ENCODE measurements at regions of chr3 and their contacts with region 1.

Region 1: DNA sequence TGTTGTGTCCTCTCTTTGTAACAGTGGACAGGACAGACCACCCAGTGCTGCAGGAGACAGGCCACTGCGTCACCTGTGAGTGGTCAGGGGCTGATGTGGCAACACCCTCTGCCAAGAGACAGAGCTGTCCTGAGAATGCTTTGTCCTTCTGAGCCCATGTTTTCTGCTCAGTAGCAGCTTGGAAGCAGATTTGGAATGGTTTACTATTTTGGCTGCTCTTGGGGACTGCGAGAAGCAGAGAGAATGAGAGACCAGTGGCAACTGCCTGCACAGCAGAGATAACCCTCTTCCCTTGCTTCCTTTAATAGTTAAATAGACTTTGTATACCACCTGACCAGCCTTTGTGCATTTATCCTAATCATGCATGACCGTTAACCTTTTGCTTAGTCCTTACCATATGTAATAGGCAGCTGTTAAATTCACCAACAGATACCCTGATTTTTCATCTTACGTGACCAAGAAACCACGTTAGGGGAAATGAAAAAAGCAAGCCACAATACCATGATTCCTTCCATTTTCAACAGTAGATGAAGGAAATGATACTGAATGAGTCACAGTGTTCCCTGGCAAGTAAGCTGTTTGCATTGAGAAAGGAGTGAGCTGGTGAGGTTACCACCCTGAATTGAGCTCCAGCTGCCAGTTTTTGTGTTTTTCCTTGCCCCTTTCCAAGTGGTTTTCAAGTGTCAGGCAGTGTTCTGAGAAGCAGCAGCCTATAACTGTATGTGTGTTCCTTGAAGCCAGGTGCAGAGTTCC is 35.5 kb downstream of the B3GALNT1 start:
- H3K4me3 Mint-ChIP-seq: peak overlapping the region; percentile 40
- H3K27ac Mint-ChIP-seq: peak overlapping the region; percentile 88
- H3K4me1 Mint-ChIP-seq: peaks cover 72% of the 10 kb centered on the region
- H3K27me3 Mint-ChIP-seq: no peaks in the 10 kb centered on the region

Region 2: DNA sequence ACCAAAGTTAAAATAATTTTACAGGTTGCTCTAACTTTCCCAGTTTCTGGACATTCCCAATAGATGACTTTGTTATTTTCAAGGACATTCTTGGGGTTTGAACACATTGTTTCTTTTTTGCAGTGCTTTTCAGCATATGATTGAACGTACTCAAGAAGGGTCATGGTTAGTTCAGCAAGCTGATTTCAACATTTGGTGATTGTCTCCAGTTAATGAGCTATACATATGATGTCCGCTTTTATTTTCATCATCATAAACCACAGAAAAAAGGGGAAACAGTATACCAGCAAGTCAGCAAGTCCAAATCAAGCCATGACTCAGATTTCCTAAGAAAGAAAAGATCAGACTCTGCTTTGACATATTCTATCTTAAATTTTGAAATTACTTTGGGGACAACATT is 34.0 kb before region 1 on chr3:
- intact Hi-C with region 1: loop called (anchors 5 kb)
- H3K4me3 Mint-ChIP-seq: no peak overlapping the region
- H3K27ac Mint-ChIP-seq: peak overlapping the region; percentile 80
- H3K4me1 Mint-ChIP-seq: peaks cover 56% of the 10 kb centered on the region
- H3K27me3 Mint-ChIP-seq: no peaks in the 10 kb centered on the region

Region 3: DNA sequence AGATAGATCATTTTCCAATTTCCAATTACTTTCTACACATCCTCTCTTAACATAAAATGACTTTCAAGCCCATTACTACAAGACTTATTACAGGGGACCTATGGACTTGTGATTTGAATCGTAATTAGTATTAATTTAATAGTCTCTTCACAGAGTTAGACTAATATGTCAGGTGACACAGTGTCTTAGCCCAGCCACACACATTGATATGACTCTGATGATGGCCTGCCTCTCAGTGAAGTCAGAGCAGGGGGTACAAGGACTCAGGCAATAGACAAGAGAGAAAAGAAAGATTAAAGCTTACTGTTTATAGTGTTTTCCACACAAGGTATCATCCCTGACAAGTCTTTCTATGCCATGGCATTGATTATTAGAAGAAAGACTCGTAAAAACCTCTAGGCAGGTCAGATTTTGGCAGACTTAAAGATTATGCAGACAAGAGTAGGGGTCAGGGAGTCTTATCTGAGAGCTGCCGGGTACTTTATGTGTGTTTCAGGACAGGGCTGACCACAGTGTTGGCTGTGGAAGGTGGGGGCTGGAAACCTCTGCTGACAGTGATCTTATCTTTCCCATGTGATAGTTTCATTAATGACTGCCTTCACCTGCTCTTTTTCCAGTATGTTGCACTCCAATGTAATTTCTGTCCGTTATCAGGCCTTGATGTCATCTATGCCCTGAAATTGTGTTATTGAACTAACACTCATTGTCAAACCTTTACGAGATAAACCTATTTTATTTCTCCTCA is 14.7 kb before region 1 on chr3:
- intact Hi-C with region 1: no loop called
- H3K4me3 Mint-ChIP-seq: no peak overlapping the region
- H3K27ac Mint-ChIP-seq: peak overlapping the region; percentile 63
- H3K4me1 Mint-ChIP-seq: peaks cover 54% of the 10 kb centered on the region
- H3K27me3 Mint-ChIP-seq: no peaks in the 10 kb centered on the region

Region 4: GRCh38 chr3:161163297-161163696 is 93.6 kb after region 1 on chr3:
- intact Hi-C with region 1: no loop called
- H3K4me3 Mint-ChIP-seq: no peak overlapping the region
- H3K27ac Mint-ChIP-seq: no peak overlapping the region
- H3K4me1 Mint-ChIP-seq: no peaks in the 10 kb centered on the region
- H3K27me3 Mint-ChIP-seq: no peaks in the 10 kb centered on the region